H1 (cell line): ENCODE measurements at regions of chr20 and their contacts with region 1.

Region 1: DNA sequence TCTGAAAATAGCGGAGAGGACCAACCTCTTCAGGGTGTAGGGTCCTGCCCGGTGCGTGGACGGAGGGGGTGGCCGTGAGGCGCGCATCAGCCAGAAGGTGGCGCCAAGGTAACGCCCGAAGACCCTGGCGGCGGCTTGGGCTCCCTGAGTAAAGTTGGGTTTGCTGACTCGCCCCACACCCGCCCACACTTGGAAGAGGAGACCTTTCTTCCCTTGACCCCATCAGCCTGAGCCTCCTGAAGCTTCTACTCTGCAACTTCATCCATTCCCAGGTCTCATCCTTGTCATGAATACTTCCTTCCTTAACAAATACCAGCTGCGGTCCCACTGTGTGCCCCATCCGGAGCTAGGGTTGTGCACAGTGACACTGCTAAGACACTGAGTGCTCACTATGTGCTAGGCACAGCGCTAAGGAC is 14.6 kb downstream of the CD40 start:
- DNase-seq: peak in 1 of 2 experiments; percentile 93
- H3K4me3 ChIP-seq: no peak overlapping the region
- H3K27ac ChIP-seq: no peak overlapping the region
- H3K4me1 ChIP-seq: peaks cover 0 to 4% (median 4%) of the 10 kb centered on the region in 4 experiments; a peak in 6 of 7 replicates
- H3K27me3 ChIP-seq: peaks cover 0 to 4% (median 2%) of the 10 kb centered on the region in 4 experiments; a peak in 4 of 7 replicates
- CTCF ChIP-seq: peak; percentile 91 to 96 (median 96)
- EP300 ChIP-seq: no peak
- POLR2A ChIP-seq: no peak
- RAD21 ChIP-seq: peak; percentile 97

Region 2: DNA sequence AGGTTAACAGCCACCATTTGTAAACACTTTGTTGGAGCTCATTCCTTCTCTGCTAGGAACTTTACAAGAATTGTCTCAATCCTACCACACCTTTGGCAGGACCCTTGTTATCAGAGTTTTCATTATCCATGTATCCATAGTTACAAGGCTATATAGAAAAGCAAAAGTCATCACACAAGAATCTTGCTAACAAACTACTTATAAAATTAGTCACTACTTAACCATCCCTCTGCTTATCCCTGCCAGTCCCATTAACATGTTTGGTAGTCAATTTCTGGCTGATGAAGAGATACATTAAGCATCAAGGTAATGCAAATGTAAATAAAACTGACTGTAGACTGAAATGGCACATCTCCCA is 264.9 kb before region 1 on chr20:
- CTCF ChIA-PET with region 1: no interaction called
- POLR2A ChIA-PET with region 1: no interaction called
- DNase-seq: no peak
- H3K4me3 ChIP-seq: no peak overlapping the region
- H3K27ac ChIP-seq: no peak overlapping the region
- H3K4me1 ChIP-seq: no peaks in the 10 kb centered on the region
- H3K27me3 ChIP-seq: no peaks in the 10 kb centered on the region
- CTCF ChIP-seq: no peak
- EP300 ChIP-seq: no peak
- POLR2A ChIP-seq: no peak
- RAD21 ChIP-seq: no peak

Region 3: DNA sequence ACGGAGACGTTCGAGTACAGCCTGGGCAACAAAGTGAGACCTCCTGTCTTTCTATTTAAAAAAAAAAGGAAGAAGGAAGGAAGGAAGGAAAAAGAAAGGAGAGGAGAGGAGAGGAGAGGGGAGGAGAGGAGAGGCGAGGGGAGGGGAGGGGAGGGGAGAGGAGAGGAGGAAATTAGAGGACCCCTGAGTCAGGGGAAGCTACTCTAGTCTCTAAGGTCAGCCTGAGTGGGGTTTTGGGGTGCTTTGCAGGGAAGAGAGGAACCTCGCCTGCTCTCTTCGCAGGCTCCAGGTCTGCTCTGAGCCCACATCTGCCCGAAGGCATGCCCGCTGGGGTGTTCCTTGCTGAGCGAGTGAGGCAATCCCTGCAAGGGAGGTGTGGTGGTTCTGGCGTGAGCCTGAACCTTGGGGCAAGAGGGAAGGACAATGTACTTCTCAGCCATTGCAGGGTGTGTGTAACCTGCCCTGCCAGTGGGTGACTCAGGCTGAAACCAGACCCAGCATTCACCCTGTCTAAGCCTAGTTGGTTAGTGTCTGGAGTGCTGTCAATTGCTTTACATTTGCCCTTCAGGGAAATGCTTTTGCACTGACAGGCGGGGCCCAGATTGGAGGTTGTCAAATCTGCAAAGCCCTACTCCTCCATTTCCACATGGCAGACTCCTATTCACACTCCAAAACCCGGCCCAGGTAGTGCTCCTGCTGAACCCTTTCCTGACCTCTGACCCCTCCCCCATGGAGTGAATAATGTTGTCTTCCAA is 139.3 kb before region 1 on chr20:
- CTCF ChIA-PET with region 1: no interaction called
- POLR2A ChIA-PET with region 1: no interaction called
- DNase-seq: no peak
- H3K4me3 ChIP-seq: no peak overlapping the region
- H3K27ac ChIP-seq: no peak overlapping the region
- H3K4me1 ChIP-seq: peaks cover 0 to 6% (median 3%) of the 10 kb centered on the region in 4 experiments; a peak in 3 of 7 replicates
- H3K27me3 ChIP-seq: no peaks in the 10 kb centered on the region
- CTCF ChIP-seq: no peak
- EP300 ChIP-seq: no peak
- POLR2A ChIP-seq: no peak
- RAD21 ChIP-seq: no peak

Region 4: GRCh38 chr20:46117704-46118467 is 14.8 kb before region 1 on chr20 and contains the start of gene CD40:
- CTCF ChIA-PET with region 1: interaction called, 60 read pairs
- POLR2A ChIA-PET with region 1: interaction called, 6 read pairs
- DNase-seq: peak; percentile 51 to 95
- H3K4me3 ChIP-seq: peak within 1 kb of the TSS; percentile 53 to 72 (median 64)
- H3K27ac ChIP-seq: no peak within 1 kb of the TSS
- H3K4me1 ChIP-seq: peaks cover 0 to 3% (median 0%) of the 10 kb centered on the region in 4 experiments; a peak in 2 of 7 replicates
- H3K27me3 ChIP-seq: peaks cover 0 to 25% (median 9%) of the 10 kb centered on the region in 4 experiments; a peak in 5 of 7 replicates
- CTCF ChIP-seq: no peak
- EP300 ChIP-seq: no peak
- POLR2A ChIP-seq: peak in 1 of 2 experiments; percentile 78; a peak in 2 of 3 replicates
- RAD21 ChIP-seq: no peak
- total RNA-seq, gene CD40: 12.1 and 14.5 TPM in 2 replicates

Region 5: DNA sequence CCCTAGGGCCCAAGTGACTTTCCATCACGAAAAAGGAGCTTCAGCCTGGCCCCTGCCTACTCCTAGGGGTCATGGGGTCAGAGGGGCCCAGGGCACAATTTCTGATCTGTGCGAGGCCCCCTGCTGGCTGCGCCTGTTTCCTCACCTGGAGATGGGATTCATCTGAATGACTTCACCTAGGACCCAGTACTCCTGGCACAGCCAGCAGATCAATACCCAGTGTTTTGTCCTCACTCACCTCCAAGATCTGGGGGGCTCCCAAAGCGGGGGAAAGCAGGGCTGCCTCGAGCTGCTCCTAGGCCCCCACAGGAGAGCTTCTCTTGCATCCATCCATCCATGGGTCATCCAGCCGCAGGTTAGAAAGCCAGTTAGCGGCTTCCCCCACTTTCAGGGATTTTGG is 19.2 kb after region 1 on chr20:
- CTCF ChIA-PET with region 1: interaction called, 21 read pairs
- POLR2A ChIA-PET with region 1: no interaction called
- DNase-seq: peak in 1 of 2 experiments; percentile 82
- H3K4me3 ChIP-seq: no peak overlapping the region
- H3K27ac ChIP-seq: no peak overlapping the region
- H3K4me1 ChIP-seq: peaks cover 0 to 5% (median 0%) of the 10 kb centered on the region in 4 experiments; a peak in 2 of 7 replicates
- H3K27me3 ChIP-seq: no peaks in the 10 kb centered on the region
- CTCF ChIP-seq: peak; percentile 57 to 67 (median 66)
- EP300 ChIP-seq: no peak
- POLR2A ChIP-seq: no peak
- RAD21 ChIP-seq: peak; percentile 28 to 52; a peak in 3 of 4 replicates

Region 6: DNA sequence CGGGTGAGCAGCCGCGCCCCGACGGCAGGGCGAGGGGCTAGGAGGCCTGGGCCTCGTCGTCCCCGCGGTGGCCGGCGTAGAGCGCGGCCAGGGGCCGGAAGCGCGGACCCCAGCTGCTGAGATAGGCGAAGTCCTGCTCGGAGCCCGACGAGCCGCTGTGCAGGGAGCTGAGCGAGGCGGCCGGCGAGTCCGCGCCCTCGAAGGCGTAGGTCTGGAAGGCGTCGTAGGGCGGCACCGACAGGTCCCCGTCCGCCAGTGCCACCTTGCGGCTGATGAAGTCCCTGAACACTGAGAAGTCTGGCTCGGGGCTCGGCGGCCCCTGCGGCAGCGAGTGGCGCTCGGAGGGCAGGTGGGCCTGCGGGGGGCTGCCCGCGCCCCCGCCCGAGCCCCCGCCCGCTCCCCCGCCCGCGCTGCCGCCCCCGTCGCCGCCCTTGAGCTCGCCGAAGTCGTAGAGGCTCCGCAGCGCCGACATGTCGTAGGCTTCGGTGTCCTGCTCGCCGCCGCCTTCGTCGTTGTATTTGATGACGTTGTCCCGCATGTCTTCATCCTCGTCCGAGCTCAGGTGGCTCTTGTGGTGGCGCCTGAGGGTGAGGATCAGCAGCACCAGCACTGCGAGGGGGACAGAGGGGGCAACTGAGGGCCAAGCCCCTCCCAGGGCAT is 41.9 kb after region 1 on chr20:
- CTCF ChIA-PET with region 1: interaction called, 171 read pairs
- POLR2A ChIA-PET with region 1: interaction called, 5 read pairs
- DNase-seq: peak; percentile 70 to 92
- H3K4me3 ChIP-seq: peak overlapping the region; percentile 9 to 50 (median 20); a peak in 5 of 8 replicates
- H3K27ac ChIP-seq: no peak overlapping the region
- H3K4me1 ChIP-seq: no peaks in the 10 kb centered on the region; a peak in 1 of 7 replicates
- H3K27me3 ChIP-seq: peaks cover 8 to 33% (median 32%) of the 10 kb centered on the region in 4 experiments
- CTCF ChIP-seq: peak; percentile 82 to 88 (median 85)
- EP300 ChIP-seq: no peak; a peak in 1 of 3 replicates
- POLR2A ChIP-seq: no peak
- RAD21 ChIP-seq: peak; percentile 65 to 82

Region 7: DNA sequence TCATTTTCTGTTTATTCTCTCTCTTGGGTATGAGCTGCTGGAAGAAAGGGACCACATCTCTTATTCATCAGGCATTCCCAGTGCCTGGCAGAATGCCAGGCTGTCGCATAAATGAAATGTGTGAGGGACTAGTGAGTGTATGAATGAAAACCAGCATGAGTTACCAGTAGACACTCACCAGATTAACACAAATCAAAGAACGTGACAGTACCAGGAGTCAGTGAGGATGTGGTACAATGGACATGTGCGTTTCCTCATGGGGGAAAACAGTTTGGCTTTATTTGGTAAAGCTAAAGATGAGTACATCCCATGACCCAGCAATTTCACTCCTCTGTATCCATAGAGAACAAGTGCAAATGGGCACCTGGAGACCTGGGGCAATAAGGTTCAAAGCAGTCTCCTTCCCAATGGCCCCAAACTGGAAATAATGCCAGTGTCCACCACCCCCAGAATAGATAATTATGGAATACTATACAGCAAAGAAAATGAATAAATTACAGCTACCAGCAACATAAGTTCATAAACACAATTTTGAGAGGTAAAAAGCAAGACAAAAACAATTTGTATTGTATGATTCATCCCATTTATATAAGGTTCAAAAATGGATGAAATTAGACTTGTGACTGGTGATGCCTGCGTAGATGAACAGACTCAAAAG is 82.2 kb after region 1 on chr20:
- CTCF ChIA-PET with region 1: interaction called, 15 read pairs
- POLR2A ChIA-PET with region 1: no interaction called
- DNase-seq: no peak
- H3K4me3 ChIP-seq: no peak overlapping the region
- H3K27ac ChIP-seq: no peak overlapping the region
- H3K4me1 ChIP-seq: peaks cover 0 to 15% (median 13%) of the 10 kb centered on the region in 4 experiments; a peak in 6 of 7 replicates
- H3K27me3 ChIP-seq: no peaks in the 10 kb centered on the region; a peak in 2 of 7 replicates
- CTCF ChIP-seq: no peak
- EP300 ChIP-seq: no peak
- POLR2A ChIP-seq: no peak
- RAD21 ChIP-seq: no peak

Region 8: GRCh38 chr20:46283426-46284039 is 150.8 kb after region 1 on chr20:
- CTCF ChIA-PET with region 1: interaction called, 10 read pairs
- POLR2A ChIA-PET with region 1: no interaction called
- DNase-seq: no peak
- H3K4me3 ChIP-seq: no peak overlapping the region
- H3K27ac ChIP-seq: no peak overlapping the region
- H3K4me1 ChIP-seq: peaks cover 0 to 9% (median 1%) of the 10 kb centered on the region in 4 experiments; a peak in 1 of 7 replicates
- H3K27me3 ChIP-seq: no peaks in the 10 kb centered on the region
- CTCF ChIP-seq: no peak
- EP300 ChIP-seq: no peak
- POLR2A ChIP-seq: no peak
- RAD21 ChIP-seq: no peak

Region 9: DNA sequence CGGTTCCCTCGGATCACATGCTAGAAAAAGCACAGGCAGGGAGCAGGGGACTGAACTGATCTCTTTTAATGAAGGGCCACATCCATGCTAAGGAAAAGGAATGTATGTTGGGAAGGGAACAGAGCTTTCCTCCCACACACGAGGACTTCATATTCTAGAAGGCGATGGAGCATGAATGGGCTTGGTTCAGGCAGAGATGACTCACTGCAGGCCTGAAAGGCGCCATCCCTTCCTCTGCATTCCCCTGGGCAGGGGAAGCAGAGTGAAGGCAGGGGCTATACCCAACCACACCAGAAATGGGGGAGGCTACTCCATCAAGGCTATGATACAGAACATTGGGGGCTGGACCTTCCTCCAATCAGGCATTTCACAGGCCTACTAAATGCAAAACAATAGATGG is 243.1 kb after region 1 on chr20:
- CTCF ChIA-PET with region 1: no interaction called
- POLR2A ChIA-PET with region 1: no interaction called
- DNase-seq: no peak
- H3K4me3 ChIP-seq: no peak overlapping the region
- H3K27ac ChIP-seq: no peak overlapping the region
- H3K4me1 ChIP-seq: no peaks in the 10 kb centered on the region
- H3K27me3 ChIP-seq: no peaks in the 10 kb centered on the region
- CTCF ChIP-seq: no peak
- EP300 ChIP-seq: no peak
- POLR2A ChIP-seq: no peak
- RAD21 ChIP-seq: no peak

Region 10: GRCh38 chr20:47113362-47114109 is 980.8 kb after region 1 on chr20:
- CTCF ChIA-PET with region 1: no interaction called
- POLR2A ChIA-PET with region 1: no interaction called
- DNase-seq: no peak
- H3K4me3 ChIP-seq: no peak overlapping the region
- H3K27ac ChIP-seq: no peak overlapping the region
- H3K4me1 ChIP-seq: peaks cover 0 to 4% (median 3%) of the 10 kb centered on the region in 4 experiments; a peak in 3 of 7 replicates
- H3K27me3 ChIP-seq: no peaks in the 10 kb centered on the region
- CTCF ChIP-seq: no peak
- EP300 ChIP-seq: no peak
- POLR2A ChIP-seq: no peak
- RAD21 ChIP-seq: no peak